GM10248 (cell line): ENCODE measurements at regions of chr20 and their contacts with region 1.

Region 1: DNA sequence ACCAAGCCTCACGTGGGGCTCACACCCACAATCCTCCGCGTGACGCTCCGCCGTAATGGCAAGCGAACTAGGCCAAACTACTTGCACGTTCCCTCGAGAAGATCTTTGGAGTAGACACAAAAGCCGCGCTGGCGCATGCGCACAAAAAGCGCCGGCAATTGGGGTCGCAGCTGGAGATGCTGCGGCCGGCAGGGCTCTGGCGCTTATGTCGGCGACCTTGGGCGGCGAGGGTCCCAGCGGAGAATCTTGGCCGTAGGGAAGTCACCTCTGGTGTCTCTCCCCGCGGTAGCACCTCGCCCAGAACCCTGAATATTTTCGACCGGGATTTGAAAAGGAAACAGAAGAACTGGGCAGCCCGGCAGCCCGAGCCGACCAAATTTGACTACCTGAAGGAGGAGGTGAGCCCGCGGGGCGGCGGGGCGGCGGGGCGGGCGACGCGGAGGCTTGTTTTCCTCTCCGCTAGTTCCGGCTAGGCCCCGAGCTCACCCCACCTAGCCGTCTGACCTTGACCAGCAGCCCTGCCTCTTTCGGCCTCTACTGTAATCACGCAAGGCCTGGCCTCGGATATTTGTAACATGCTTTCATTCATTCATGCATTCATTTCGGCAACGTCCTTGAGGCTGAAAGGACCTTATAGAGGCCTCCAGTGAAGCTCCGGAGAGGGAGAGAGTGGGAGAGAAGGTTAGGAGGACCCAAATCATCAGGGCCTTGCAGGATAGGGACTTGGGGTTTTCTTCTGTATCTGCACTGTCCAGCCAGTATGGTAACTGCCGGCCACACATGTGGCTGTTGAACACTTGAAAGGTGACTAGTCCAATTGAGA is at the starts of genes ESF1 and NDUFAF5:
- DNase-seq: peak; percentile 93
- CTCF ChIP-seq: no peak

Region 2: GRCh38 chr20:13800728-13801134 is 15.6 kb after region 1 on chr20:
- CTCF ChIA-PET with region 1: interaction called, 22 read pairs
- POLR2A ChIA-PET with region 1: no interaction called
- DNase-seq: no peak
- CTCF ChIP-seq: no peak